HepG2 (cell line): ENCODE measurements at regions of chr9 and their contacts with region 1.

Region 1: DNA sequence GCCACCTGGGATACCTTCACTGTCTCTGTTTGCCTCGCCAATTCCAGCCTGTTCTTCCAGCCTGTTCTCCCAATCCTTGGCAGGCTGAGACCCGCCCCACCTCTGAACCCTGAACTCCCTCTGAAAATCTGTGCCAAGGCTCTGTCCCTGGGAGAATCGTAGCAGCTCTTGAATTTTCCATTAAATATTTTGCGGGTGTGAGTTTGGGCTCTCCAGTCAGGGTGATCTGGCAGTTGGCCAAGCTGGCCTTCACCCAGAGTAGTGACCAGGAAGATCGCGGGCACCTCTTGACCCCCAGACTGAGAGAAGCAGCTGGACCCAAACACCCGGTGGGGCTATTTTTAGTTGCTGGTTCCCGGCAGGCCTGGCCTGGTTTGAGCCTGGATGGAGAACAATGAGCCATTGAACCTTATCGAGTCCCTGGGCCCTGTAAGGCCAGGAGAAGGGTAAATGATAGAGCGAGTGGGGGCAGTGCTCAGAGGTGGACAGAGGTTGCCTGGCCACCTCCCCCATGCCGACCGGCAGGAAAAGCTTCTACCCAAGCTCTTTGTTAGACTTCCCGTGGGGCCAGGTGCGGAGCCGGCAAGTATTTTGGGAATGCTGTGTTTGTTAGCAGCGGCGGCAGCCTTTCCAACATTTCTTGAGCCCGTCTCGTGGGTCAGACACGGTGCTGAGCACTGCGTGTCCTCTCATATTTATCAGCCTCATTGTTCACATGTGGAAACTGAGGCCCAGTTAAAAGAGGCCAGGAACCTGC is 146.2 kb downstream of the RGS3 start:
- DNase-seq: peak; percentile 97
- ATAC-seq: peak; percentile 99
- H3K4me3 ChIP-seq: peak overlapping the region; percentile 36 to 63 (median 39)
- H3K27ac ChIP-seq: peak overlapping the region; percentile 86
- H3K4me1 ChIP-seq: peaks cover 78% of the 10 kb centered on the region
- H3K27me3 ChIP-seq: peaks cover 0 to 6% of the 10 kb centered on the region in 2 experiments; a peak in 1 of 5 replicates
- CTCF ChIP-seq: peak; percentile 31
- EP300 ChIP-seq: peak in 1 of 2 experiments; percentile 77; a peak in 2 of 4 replicates
- POLR2A ChIP-seq: peak in 1 of 2 experiments; percentile 36; a peak in 1 of 4 replicates
- RAD21 ChIP-seq: peak; percentile 24; the same call in 1 of the 2 replicates

Region 2: GRCh38 chr9:113630386-113631136 is 20.8 kb after region 1 on chr9:
- CTCF ChIA-PET with region 1: no interaction called
- POLR2A ChIA-PET with region 1: interaction called, 3 read pairs
- in situ Hi-C with region 1: no loop called
- intact Hi-C with region 1: loop called (anchors 1 kb)
- DNase-seq: no peak
- ATAC-seq: no peak
- H3K4me3 ChIP-seq: no peak overlapping the region
- H3K27ac ChIP-seq: no peak overlapping the region
- H3K4me1 ChIP-seq: peaks cover 53% of the 10 kb centered on the region
- H3K27me3 ChIP-seq: peaks cover 0 to 41% of the 10 kb centered on the region in 2 experiments; a peak in 3 of 5 replicates
- CTCF ChIP-seq: no peak
- EP300 ChIP-seq: no peak
- POLR2A ChIP-seq: no peak
- RAD21 ChIP-seq: no peak